Right ventricle myocardium inferior (tissue), 1 donor: ENCODE measurements at regions of chr17 and their contacts with region 1.

Region 1: DNA sequence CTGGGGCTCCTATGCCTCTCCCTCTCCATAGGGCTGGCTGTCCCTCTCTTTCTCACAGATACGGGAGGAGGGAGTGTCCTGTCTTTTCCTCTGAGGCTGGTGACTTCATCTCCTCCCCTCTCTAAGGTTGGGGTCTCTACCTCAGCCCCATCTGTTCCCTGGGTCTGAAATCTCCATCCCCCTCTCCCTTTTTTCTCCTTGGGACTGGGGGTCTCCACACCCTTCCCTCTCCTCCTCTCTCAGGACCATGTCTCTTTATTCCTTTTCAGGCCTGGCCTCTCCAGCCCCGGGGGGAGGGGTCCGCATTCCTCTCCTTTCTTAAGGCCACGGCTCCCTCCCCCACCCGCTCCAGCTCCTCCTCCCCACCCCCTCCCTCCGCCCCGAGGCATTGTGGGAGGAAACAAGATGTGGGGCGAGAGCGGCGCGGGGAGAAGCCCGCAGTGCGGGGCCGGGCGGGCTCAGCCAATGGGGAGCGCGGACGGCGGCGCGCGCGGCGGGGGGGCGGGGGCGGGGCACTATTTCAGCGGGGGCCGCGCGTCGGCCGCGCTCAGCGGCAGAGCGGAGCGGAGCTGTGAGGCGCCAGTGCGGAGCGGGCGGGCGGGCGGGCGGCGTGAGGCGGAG is at the start of gene DYNLL2:
- DNase-seq: peak; percentile 98
- ATAC-seq: peak; percentile 94
- total RNA-seq, gene DYNLL2: 81.4 TPM

Region 2: DNA sequence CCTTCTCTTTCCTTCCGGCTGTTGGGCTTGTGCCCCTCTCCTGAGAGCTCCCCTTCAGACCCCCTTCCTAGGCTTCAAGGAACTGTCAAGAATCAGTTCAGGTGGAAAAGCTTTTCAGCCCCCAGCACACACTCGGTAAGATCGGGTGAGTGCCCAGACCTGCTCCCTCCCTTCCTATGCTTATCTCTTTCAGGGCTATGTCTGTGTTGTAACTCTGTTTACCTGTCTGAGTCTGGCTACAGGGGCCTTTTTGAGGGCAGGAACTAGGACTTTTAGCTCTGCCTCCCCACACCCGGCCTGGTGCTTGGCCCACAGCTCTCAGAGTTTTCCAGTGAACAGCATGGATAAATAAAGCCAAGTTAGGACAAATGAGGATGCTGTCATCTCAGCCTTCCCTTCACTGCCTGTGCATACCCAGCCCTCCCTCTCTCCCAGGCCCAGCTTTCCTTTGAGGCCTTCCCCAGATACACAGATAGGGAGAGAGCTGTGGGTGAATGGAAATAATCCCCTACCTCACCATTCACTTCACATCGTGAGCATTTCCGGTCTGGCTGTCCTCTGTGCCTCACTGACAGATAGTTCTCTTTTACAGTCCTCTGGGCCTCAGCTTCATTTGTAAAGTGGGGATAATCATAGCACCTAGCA is 227.5 kb before region 1 on chr17:
- intact Hi-C with region 1: loop called (anchors 5 kb)
- DNase-seq: no peak
- ATAC-seq: no peak

Region 3: GRCh38 chr17:57970706-57971105 is 112.3 kb before region 1 on chr17:
- intact Hi-C with region 1: no loop called
- DNase-seq: no peak
- ATAC-seq: no peak

Region 4: GRCh38 chr17:58006924-58007780 is 75.8 kb before region 1 on chr17 and contains the start of gene SRSF1:
- intact Hi-C with region 1: loop called (anchors 1 kb)
- DNase-seq: peak; percentile 99
- ATAC-seq: peak; percentile 96
- total RNA-seq, gene SRSF1: 92.8 TPM

Region 5: DNA sequence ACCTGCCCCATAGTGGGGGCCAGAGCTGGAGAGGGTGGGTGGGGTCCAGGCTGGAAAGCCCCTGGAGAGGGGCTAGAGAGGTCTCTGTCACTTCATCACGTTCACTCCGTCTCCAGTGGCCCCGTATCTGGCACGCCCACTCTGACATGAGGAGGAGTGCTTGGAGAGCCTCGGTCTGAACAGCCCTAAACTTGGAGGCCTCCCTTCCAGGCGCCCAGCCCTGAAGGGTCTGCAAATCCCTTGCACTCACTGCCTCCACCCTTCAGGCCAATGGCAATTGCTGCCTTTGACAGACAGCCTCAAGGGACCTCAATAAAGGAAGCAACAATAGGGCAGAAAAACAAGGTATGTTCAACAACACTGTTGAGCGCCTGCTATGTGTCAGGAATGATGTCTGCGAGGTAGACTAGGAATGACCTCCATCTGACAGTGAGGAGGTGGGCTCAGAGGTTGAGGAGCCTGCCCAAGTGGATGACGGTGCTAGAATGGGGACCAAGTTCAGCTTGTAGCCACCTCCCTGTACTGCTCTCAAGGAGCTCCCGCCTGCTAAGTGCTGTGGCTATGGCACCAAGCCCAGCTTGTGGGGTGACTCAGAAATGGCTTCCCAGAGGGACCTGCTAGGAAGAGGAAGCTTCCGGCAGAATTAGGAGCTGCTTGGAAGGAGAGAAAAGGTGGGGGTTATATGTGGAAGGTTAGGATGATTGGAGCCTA is 106.6 kb after region 1 on chr17:
- intact Hi-C with region 1: no loop called
- DNase-seq: no peak
- ATAC-seq: peak; percentile 58

Region 6: DNA sequence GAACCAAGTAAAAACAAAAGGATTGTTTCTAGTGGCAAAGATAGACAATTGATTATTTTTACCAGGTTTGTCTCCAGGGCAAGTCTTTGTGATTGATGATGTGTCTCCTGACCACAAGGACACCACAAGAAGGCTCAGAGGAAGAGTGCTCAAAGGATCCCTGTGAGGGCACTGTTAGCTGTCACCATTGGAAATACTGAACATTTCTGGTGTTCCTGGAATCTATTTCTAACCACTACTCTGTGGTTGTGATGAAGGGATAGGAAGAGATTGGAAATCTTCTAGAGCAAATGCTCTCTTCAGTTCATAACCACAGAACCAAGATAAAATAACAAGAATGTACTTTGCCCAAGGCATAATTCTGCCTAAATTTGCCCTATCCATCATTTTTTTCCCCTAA is 319.1 kb after region 1 on chr17:
- intact Hi-C with region 1: no loop called
- DNase-seq: no peak
- ATAC-seq: no peak